ENCODE measurements at regions of chr2 and their contacts with region 1.

Region 1: DNA sequence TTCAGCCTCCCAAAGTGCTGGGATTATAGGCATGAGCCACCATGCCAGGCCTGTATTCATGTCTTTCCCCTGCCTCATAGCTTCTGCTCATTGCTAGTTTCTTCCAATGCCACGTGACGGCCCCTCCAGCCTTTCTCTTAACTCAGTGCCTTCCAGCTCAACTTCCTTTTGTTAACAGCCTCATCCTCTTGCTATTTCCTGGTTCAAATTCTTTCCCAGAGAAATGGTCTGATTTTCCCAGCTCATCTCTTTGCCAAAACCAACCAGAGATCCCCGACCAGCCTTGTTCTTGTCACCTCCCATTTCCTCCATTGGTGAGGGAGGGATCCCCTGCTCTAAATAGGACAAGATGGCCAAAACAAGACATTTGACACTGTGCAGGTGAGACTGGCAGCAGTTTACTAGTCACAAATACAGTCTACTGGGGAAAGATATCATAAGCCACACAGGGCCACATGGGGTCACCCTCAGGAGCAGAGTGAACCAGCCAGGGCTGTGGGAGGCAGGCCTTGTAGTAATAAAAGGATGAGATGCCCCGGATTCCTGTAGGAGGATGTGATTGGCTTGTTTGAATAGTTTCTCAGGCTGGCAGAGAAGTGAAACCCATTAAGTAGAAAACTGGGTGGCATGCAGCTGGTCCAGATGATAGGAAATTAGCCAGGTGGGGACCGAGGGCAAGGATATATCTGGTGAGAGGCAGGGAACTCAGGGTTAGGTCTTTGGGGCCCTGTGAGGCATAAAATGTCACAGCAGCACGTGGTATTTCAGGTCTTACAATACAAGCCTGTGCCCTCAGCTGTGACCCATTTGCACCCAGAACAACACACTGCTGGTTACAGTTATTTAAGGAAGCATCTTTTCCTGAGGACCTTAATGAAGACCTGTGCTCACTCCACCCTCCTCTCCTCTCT is 6.4 kb downstream of the CD207 start:
- DNase-seq: no peak
- H3K4me3 ChIP-seq: no peak overlapping the region
- CTCF ChIP-seq: no peak

Region 2: DNA sequence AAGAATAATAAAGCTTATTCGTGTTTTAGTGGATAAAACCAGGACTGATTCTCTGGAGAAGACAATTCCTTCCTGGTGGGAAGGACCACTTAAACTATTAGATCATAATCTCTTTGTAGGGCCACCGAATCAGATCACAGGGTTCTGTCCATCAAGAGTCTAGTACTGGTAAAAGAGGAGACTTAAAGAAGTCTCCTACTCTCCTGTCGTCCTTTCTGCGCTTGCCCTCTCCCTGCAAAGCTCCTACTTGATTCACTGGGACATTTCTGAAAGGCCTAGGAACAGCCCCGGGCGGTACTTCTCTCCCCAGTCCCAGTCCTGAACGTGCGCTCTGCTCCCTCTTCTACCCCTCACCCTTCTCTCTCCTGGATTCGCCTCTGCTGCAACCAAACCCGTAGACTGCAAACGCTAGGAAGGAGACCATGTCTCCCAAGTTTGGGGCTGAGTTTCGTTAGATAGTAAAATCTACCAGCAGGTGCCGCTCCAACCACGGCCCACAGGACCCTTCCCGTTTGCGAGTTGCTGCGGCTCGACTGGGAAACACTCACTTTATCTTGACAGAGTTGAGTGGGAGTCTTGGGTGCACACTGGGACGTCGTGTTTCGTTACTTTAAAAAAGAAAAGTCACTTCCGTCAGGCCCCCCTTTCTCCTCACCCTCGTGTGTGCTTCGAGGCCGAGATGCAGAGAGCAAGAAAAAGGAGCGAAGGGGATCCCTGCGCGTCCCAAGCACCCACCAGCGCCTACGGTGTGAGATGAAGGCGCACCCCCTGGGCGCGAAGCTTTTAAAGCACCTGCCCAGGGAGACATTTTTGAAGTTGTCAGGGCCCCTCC is 39.6 kb before region 1 on chr2:
- in situ Hi-C with region 1: no loop called
- DNase-seq: peak; percentile 18
- H3K4me3 ChIP-seq: peak overlapping the region; percentile 4
- CTCF ChIP-seq: peak; percentile 75

Region 3: GRCh38 chr2:70861777-70862625 is 32.8 kb after region 1 on chr2:
- in situ Hi-C with region 1: loop called (anchors 5 kb)
- DNase-seq: peak; percentile 56
- H3K4me3 ChIP-seq: no peak overlapping the region
- CTCF ChIP-seq: peak; percentile 100

Region 4: GRCh38 chr2:72745679-72746368 is 1916.7 kb after region 1 on chr2:
- in situ Hi-C with region 1: no loop called
- DNase-seq: peak; percentile 62
- H3K4me3 ChIP-seq: no peak overlapping the region
- CTCF ChIP-seq: peak; percentile 48

Measured in astrocyte of the cerebellum (primary cell).